ENCODE measurements at regions of chr2 and their contacts with region 1.

Region 1: DNA sequence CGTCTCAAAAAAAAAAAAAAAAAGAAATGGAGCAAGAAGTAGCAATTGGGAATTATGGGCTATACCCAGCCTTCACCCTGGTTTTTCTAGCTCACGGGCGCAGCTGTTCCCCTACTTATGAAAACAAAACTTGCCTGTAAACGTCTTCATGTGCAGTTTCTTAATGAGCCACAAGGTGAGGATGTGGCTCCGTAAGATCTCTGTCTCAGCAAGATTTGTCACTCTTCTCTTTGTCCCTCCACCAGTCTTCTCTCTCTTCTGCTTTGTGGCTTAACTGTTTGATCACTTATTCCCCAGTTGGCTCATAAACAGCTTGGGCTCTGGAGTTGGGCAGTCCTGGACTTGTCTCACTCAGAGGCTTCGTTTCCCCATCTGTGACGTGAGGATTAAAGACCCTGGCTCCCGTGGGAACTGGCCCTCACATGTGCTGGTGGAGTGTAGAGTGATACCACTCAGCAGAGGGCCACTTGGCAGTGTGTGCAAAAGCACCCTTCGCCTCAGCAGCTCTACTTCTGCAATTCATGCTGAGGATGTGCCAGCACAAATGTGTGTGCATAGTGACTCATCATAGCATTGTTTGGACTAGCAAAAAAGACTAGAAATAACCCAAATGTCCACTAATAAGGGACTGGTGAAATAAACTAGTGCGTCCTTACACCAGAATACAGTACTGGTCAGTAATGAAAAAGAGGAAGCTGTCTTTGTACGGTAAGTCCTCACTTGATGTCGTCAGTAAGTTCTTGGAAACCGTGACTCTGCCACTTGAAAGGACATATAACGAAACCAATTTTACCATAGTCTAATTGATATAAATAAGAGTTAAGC is 8.7 kb downstream of the CEP68 start:
- DNase-seq: peak in 7 of 9 experiments; percentile 15 to 81 (median 43)
- ATAC-seq: peak; percentile 96
- H3K4me3 ChIP-seq: no peak overlapping the region
- H3K4me3 Mint-ChIP-seq: no peak overlapping the region
- H3K27ac ChIP-seq: no peak overlapping the region
- H3K27ac Mint-ChIP-seq: peak overlapping the region; percentile 41
- H3K4me1 ChIP-seq: peaks cover 42% of the 10 kb centered on the region
- H3K4me1 Mint-ChIP-seq: peaks cover 50% of the 10 kb centered on the region
- H3K27me3 ChIP-seq: no peaks in the 10 kb centered on the region
- H3K27me3 Mint-ChIP-seq: no peaks in the 10 kb centered on the region
- CTCF ChIP-seq: peak; percentile 78

Region 2: GRCh38 chr2:64626963-64627760 is 437.8 kb before region 1 on chr2:
- CTCF ChIA-PET with region 1: no interaction called
- POLR2A ChIA-PET with region 1: no interaction called
- intact Hi-C with region 1: no loop called
- DNase-seq: no peak
- ATAC-seq: no peak
- H3K4me3 ChIP-seq: no peak overlapping the region
- H3K4me3 Mint-ChIP-seq: no peak overlapping the region
- H3K27ac ChIP-seq: no peak overlapping the region
- H3K27ac Mint-ChIP-seq: no peak overlapping the region
- H3K4me1 ChIP-seq: no peaks in the 10 kb centered on the region
- H3K4me1 Mint-ChIP-seq: peaks cover 7% of the 10 kb centered on the region
- H3K27me3 ChIP-seq: no peaks in the 10 kb centered on the region
- H3K27me3 Mint-ChIP-seq: no peaks in the 10 kb centered on the region
- CTCF ChIP-seq: no peak

Region 3: GRCh38 chr2:64854773-64855237 is 210.1 kb before region 1 on chr2:
- CTCF ChIA-PET with region 1: no interaction called
- POLR2A ChIA-PET with region 1: no interaction called
- intact Hi-C with region 1: no loop called
- DNase-seq: no peak
- ATAC-seq: no peak
- H3K4me3 ChIP-seq: no peak overlapping the region
- H3K4me3 Mint-ChIP-seq: no peak overlapping the region
- H3K27ac ChIP-seq: no peak overlapping the region
- H3K27ac Mint-ChIP-seq: no peak overlapping the region
- H3K4me1 ChIP-seq: peaks cover 6% of the 10 kb centered on the region
- H3K4me1 Mint-ChIP-seq: peaks cover 3% of the 10 kb centered on the region
- H3K27me3 ChIP-seq: peaks cover 0 to 2% of the 10 kb centered on the region in 2 experiments
- H3K27me3 Mint-ChIP-seq: peaks cover 8% of the 10 kb centered on the region
- CTCF ChIP-seq: no peak

Region 4: GRCh38 chr2:64945973-64946768 is 118.8 kb before region 1 on chr2:
- CTCF ChIA-PET with region 1: no interaction called
- POLR2A ChIA-PET with region 1: no interaction called
- intact Hi-C with region 1: no loop called
- DNase-seq: peak; percentile 30 to 80 (median 55)
- ATAC-seq: peak; percentile 88
- H3K4me3 ChIP-seq: peak overlapping the region; percentile 31 to 40
- H3K4me3 Mint-ChIP-seq: peak overlapping the region; percentile 74
- H3K27ac ChIP-seq: peak overlapping the region; percentile 2 to 66
- H3K27ac Mint-ChIP-seq: peak overlapping the region; percentile 86
- H3K4me1 ChIP-seq: peaks cover 24% of the 10 kb centered on the region
- H3K4me1 Mint-ChIP-seq: peaks cover 32% of the 10 kb centered on the region
- H3K27me3 ChIP-seq: no peaks in the 10 kb centered on the region
- H3K27me3 Mint-ChIP-seq: no peaks in the 10 kb centered on the region
- CTCF ChIP-seq: no peak

Region 5: GRCh38 chr2:65017335-65017734 is 47.6 kb before region 1 on chr2:
- CTCF ChIA-PET with region 1: no interaction called
- POLR2A ChIA-PET with region 1: no interaction called
- intact Hi-C with region 1: no loop called
- DNase-seq: peak in 1 of 9 experiments; percentile 29
- ATAC-seq: no peak
- H3K4me3 ChIP-seq: no peak overlapping the region
- H3K4me3 Mint-ChIP-seq: no peak overlapping the region
- H3K27ac ChIP-seq: no peak overlapping the region
- H3K27ac Mint-ChIP-seq: no peak overlapping the region
- H3K4me1 ChIP-seq: no peaks in the 10 kb centered on the region
- H3K4me1 Mint-ChIP-seq: peaks cover 12% of the 10 kb centered on the region
- H3K27me3 ChIP-seq: no peaks in the 10 kb centered on the region
- H3K27me3 Mint-ChIP-seq: no peaks in the 10 kb centered on the region
- CTCF ChIP-seq: no peak

Region 6: DNA sequence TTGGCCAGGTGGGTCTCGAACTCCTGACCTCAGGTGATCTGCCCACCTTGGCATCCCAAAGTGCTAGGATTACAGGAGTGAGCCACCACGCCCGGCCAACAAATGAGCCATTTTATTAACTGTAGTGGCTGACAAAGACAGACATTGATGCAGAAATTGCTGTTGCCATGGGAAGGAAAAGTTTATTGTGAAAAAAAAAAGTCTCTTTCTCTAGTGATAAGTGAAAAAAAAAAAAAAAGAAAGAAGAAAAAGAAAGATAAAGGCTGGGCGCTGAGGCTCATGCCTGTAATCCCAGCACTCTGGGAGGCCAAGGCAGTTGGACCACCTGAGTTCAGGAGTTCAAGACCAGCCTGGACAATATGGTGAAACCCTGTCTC is 104.8 kb after region 1 on chr2:
- CTCF ChIA-PET with region 1: interaction called, 29 read pairs
- POLR2A ChIA-PET with region 1: no interaction called
- intact Hi-C with region 1: loop called (anchors 1 kb)
- DNase-seq: no peak
- ATAC-seq: no peak
- H3K4me3 ChIP-seq: no peak overlapping the region
- H3K4me3 Mint-ChIP-seq: no peak overlapping the region
- H3K27ac ChIP-seq: no peak overlapping the region
- H3K27ac Mint-ChIP-seq: no peak overlapping the region
- H3K4me1 ChIP-seq: no peaks in the 10 kb centered on the region
- H3K4me1 Mint-ChIP-seq: peaks cover 2% of the 10 kb centered on the region
- H3K27me3 ChIP-seq: no peaks in the 10 kb centered on the region
- H3K27me3 Mint-ChIP-seq: no peaks in the 10 kb centered on the region
- CTCF ChIP-seq: no peak

Region 7: GRCh38 chr2:65186872-65187851 is 122.2 kb after region 1 on chr2:
- CTCF ChIA-PET with region 1: interaction called, 19 read pairs
- POLR2A ChIA-PET with region 1: no interaction called
- intact Hi-C with region 1: loop called (anchors 1 kb)
- DNase-seq: peak; percentile 35 to 74 (median 63)
- ATAC-seq: peak; percentile 88
- H3K4me3 ChIP-seq: no peak overlapping the region
- H3K4me3 Mint-ChIP-seq: no peak overlapping the region
- H3K27ac ChIP-seq: no peak overlapping the region
- H3K27ac Mint-ChIP-seq: no peak overlapping the region
- H3K4me1 ChIP-seq: peaks cover 6% of the 10 kb centered on the region
- H3K4me1 Mint-ChIP-seq: peaks cover 9% of the 10 kb centered on the region
- H3K27me3 ChIP-seq: no peaks in the 10 kb centered on the region
- H3K27me3 Mint-ChIP-seq: peaks cover 10% of the 10 kb centered on the region
- CTCF ChIP-seq: peak; percentile 60

Measured in CD8-positive, alpha-beta T cell (primary cell).